H1 (cell line): ENCODE measurements at regions of chr2 and their contacts with region 1.

Region 1: GRCh38 chr2:217105733-217106649 is 246.1 kb upstream of the TNP1 start:
- DNase-seq: peak in 1 of 2 experiments; percentile 30
- H3K4me3 ChIP-seq: no peak overlapping the region
- H3K27ac ChIP-seq: no peak overlapping the region
- H3K4me1 ChIP-seq: peaks cover 0 to 5% (median 0%) of the 10 kb centered on the region in 4 experiments; a peak in 2 of 7 replicates
- H3K27me3 ChIP-seq: no peaks in the 10 kb centered on the region
- CTCF ChIP-seq: no peak
- EP300 ChIP-seq: no peak
- POLR2A ChIP-seq: no peak
- RAD21 ChIP-seq: no peak

Region 2: GRCh38 chr2:217027414-217027813 is 78.6 kb before region 1 on chr2:
- CTCF ChIA-PET with region 1: no interaction called
- POLR2A ChIA-PET with region 1: no interaction called
- DNase-seq: no peak
- H3K4me3 ChIP-seq: no peak overlapping the region
- H3K27ac ChIP-seq: no peak overlapping the region
- H3K4me1 ChIP-seq: no peaks in the 10 kb centered on the region
- H3K27me3 ChIP-seq: no peaks in the 10 kb centered on the region
- CTCF ChIP-seq: no peak
- EP300 ChIP-seq: no peak
- POLR2A ChIP-seq: no peak
- RAD21 ChIP-seq: no peak

Region 3: GRCh38 chr2:217081799-217082198 is 24.2 kb before region 1 on chr2:
- CTCF ChIA-PET with region 1: interaction called, 10 read pairs
- POLR2A ChIA-PET with region 1: interaction called, 3 read pairs
- DNase-seq: no peak
- H3K4me3 ChIP-seq: no peak overlapping the region
- H3K27ac ChIP-seq: no peak overlapping the region
- H3K4me1 ChIP-seq: no peaks in the 10 kb centered on the region
- H3K27me3 ChIP-seq: no peaks in the 10 kb centered on the region
- CTCF ChIP-seq: no peak
- EP300 ChIP-seq: no peak
- POLR2A ChIP-seq: no peak
- RAD21 ChIP-seq: no peak

Region 4: GRCh38 chr2:217095511-217096205 is 10.3 kb before region 1 on chr2:
- CTCF ChIA-PET with region 1: interaction called, 12 read pairs
- POLR2A ChIA-PET with region 1: interaction called, 3 read pairs
- DNase-seq: no peak
- H3K4me3 ChIP-seq: no peak overlapping the region
- H3K27ac ChIP-seq: no peak overlapping the region
- H3K4me1 ChIP-seq: no peaks in the 10 kb centered on the region
- H3K27me3 ChIP-seq: no peaks in the 10 kb centered on the region
- CTCF ChIP-seq: no peak
- EP300 ChIP-seq: no peak
- POLR2A ChIP-seq: no peak
- RAD21 ChIP-seq: no peak

Region 5: DNA sequence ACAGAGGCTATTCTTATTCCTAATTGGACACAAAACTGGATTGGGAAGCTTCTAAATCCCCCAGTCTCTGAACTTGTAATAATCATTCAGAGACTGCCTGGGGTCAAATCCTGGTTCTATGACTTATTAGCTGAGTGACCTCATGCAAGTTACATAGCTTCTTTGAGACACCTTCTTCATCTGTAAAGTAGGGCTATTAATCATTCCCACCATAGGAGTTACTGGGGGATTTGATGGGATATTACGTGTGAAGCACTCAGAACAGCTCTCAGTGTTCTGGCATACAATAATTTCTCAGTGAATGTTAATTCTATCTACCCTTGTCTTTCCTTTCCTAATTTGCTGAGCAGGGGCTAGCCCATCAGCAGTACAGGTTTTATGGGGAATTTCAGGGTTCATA is 10.6 kb after region 1 on chr2:
- CTCF ChIA-PET with region 1: interaction called, 12 read pairs
- POLR2A ChIA-PET with region 1: no interaction called
- DNase-seq: no peak
- H3K4me3 ChIP-seq: no peak overlapping the region
- H3K27ac ChIP-seq: no peak overlapping the region
- H3K4me1 ChIP-seq: no peaks in the 10 kb centered on the region
- H3K27me3 ChIP-seq: no peaks in the 10 kb centered on the region
- CTCF ChIP-seq: no peak
- EP300 ChIP-seq: no peak
- POLR2A ChIP-seq: no peak
- RAD21 ChIP-seq: no peak

Region 6: DNA sequence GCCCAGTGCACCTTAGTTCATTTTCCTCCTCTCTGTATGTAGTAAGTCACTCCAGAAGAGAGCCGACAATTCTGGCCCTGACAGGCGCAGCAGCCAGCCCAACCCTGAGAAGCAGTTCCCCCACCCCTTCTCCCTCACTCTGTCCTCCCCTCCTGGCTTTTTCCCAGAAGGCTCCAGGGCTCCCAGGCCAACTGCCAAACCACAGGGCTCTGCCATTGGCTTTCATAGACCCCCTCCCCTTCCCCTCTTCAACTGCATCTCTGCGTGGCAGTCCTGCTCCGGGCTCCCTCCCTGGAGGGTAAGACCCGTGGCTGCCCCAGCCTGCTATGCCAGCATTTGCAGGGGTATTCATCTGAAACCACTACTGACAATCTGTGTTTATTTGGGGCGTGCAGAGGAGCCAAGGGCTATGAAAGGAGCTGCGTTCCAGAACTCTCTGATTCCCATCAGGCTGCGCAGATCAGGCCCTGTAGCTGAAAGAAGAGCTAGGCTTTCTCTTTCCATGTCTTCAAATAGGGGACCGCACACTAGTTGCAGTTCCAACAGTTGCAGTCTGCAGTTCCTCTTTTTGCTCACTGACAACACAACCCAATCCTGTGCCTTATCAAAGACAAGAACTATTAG is 142.4 kb after region 1 on chr2:
- CTCF ChIA-PET with region 1: no interaction called
- POLR2A ChIA-PET with region 1: no interaction called
- DNase-seq: peak in 1 of 2 experiments; percentile 46
- H3K4me3 ChIP-seq: no peak overlapping the region
- H3K27ac ChIP-seq: no peak overlapping the region
- H3K4me1 ChIP-seq: no peaks in the 10 kb centered on the region
- H3K27me3 ChIP-seq: peaks cover 0 to 6% (median 3%) of the 10 kb centered on the region in 4 experiments; a peak in 1 of 7 replicates
- CTCF ChIP-seq: no peak
- EP300 ChIP-seq: no peak
- POLR2A ChIP-seq: no peak
- RAD21 ChIP-seq: no peak